ENCODE measurements at regions of chr14 and their contacts with region 1.

Region 1: DNA sequence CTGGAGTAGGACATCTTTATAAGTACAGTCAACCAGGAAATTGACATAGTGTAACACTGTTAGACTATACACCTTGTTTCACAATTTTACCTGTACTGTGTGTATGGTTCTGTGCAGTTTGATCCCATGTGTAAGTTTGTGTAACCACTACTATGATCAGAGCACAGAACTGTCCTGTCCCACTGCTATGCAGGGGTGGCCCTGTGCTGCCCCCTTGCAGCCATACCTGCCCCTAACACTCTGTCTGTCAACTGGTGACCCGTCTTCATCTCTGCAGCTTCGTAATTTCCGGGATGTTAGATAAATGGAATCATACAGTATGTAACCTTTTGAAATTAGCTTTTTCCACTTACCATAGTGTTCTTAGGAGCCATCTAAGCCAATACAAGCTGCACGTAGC is 58.7 kb upstream of the RD3L start:
- DNase-seq: no peak
- ATAC-seq: no peak
- H3K4me3 Mint-ChIP-seq: no peak overlapping the region
- H3K27ac Mint-ChIP-seq: no peak overlapping the region
- H3K4me1 Mint-ChIP-seq: no peaks in the 10 kb centered on the region
- H3K27me3 Mint-ChIP-seq: peaks cover 2% of the 10 kb centered on the region
- CTCF ChIP-seq: no peak

Region 2: DNA sequence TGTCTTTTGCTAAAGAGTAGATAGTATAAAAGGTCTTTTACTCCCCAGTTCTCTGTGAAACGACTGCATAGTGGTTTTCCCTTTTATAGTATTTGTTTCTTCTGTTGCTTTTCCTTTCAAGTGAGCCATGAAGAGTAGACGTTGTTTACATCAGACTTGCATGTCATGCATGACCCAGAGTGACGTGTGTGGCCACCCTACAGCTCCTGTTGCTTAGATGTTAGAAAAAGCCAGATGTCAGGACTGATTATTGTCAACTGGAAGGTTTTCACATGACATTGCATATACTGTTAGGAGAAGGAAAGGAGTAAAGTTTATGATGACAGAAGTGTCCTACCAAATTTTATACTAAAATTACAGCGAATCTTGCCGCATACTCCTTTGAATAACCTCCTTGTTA is 57.3 kb before region 1 on chr14:
- CTCF ChIA-PET with region 1: no interaction called
- POLR2A ChIA-PET with region 1: no interaction called
- intact Hi-C with region 1: no loop called
- DNase-seq: no peak
- ATAC-seq: no peak
- H3K4me3 Mint-ChIP-seq: no peak overlapping the region
- H3K27ac Mint-ChIP-seq: no peak overlapping the region
- H3K4me1 Mint-ChIP-seq: no peaks in the 10 kb centered on the region
- H3K27me3 Mint-ChIP-seq: peaks cover 35% of the 10 kb centered on the region
- CTCF ChIP-seq: no peak

Region 3: GRCh38 chr14:103984196-103984595 is 16.8 kb before region 1 on chr14:
- CTCF ChIA-PET with region 1: no interaction called
- POLR2A ChIA-PET with region 1: interaction called, 10 read pairs
- intact Hi-C with region 1: no loop called
- DNase-seq: no peak
- ATAC-seq: no peak
- H3K4me3 Mint-ChIP-seq: no peak overlapping the region
- H3K27ac Mint-ChIP-seq: no peak overlapping the region
- H3K4me1 Mint-ChIP-seq: no peaks in the 10 kb centered on the region
- H3K27me3 Mint-ChIP-seq: peaks cover 7% of the 10 kb centered on the region
- CTCF ChIP-seq: no peak

Region 4: GRCh38 chr14:104116756-104117255 is 115.8 kb after region 1 on chr14:
- CTCF ChIA-PET with region 1: no interaction called
- POLR2A ChIA-PET with region 1: no interaction called
- intact Hi-C with region 1: no loop called
- DNase-seq: no peak
- ATAC-seq: no peak
- H3K4me3 Mint-ChIP-seq: peak overlapping the region; percentile 55
- H3K27ac Mint-ChIP-seq: no peak overlapping the region
- H3K4me1 Mint-ChIP-seq: peaks cover 7% of the 10 kb centered on the region
- H3K27me3 Mint-ChIP-seq: peaks cover 33% of the 10 kb centered on the region
- CTCF ChIP-seq: no peak